ENCODE measurements at regions of chr1 and their contacts with region 1.

Region 1: GRCh38 chr1:61056573-61057439 is 25.6 kb upstream of the NFIA start:
- DNase-seq: peak; percentile 74
- H3K4me3 ChIP-seq: peak overlapping the region; percentile 33 to 77 (median 63)
- H3K27ac ChIP-seq: peak overlapping the region; percentile 79 to 96 (median 96)
- H3K4me1 ChIP-seq: peaks cover 18 to 40% (median 27%) of the 10 kb centered on the region in 4 donors
- H3K27me3 ChIP-seq: no peaks in the 10 kb centered on the region
- CTCF ChIP-seq: peak in 1 of 5 experiments; percentile 12
- EP300 ChIP-seq: no peak
- POLR2A ChIP-seq: no peak

Region 2: DNA sequence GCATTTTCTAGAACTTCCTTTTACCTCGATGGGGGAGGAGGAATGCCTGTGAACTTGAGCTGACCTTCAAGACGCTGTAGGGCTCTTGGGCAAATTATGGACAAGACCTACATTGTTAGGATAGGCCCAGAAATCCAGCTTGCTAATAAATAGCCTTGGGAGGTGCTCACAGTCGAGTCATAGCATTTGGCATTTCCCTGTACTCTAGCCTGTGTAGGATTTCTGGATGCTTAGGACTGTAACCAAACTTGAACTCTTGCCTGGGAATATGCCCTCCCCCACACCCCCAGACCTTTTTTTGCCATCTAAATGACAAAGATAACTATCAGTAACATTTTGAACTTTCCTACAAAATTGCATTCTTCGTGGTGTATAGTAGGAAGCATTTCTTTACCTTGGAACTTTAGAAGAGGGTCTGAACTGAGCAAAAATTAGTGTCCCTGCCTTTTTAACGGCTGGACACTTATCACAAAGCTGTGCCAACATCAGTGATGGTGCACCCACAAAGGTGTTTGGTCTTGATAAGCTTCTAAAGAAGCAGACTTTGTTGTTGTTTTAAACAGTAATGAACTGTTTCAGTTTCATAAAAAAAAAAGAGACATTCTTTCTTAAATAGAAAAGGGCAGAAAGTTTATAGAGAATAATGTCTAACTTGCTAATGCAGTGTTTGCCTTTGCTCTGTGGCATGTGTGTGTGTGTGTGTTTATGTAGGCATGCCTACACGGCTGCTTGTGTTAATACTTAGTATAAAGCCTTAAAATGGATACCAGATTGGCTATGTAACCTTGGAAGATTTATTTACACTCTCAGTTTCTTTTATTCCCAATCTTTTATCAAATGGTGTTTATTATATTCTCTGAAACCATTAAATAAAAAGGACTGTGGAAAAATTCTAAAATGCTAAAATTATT is 113.8 kb after region 1 on chr1:
- in situ Hi-C with region 1: no loop called
- intact Hi-C with region 1: no loop called
- DNase-seq: no peak
- H3K4me3 ChIP-seq: no peak overlapping the region
- H3K27ac ChIP-seq: peak overlapping the region; percentile 43 to 61 (median 59)
- H3K4me1 ChIP-seq: peaks cover 3 to 61% (median 25%) of the 10 kb centered on the region in 4 donors
- H3K27me3 ChIP-seq: no peaks in the 10 kb centered on the region
- CTCF ChIP-seq: no peak
- EP300 ChIP-seq: no peak
- POLR2A ChIP-seq: no peak

Region 3: GRCh38 chr1:61270761-61271411 is 214.1 kb after region 1 on chr1:
- in situ Hi-C with region 1: no loop called
- intact Hi-C with region 1: no loop called
- DNase-seq: no peak
- H3K4me3 ChIP-seq: no peak overlapping the region
- H3K27ac ChIP-seq: no peak overlapping the region
- H3K4me1 ChIP-seq: peaks cover 0 to 16% (median 3%) of the 10 kb centered on the region in 4 donors
- H3K27me3 ChIP-seq: no peaks in the 10 kb centered on the region
- CTCF ChIP-seq: no peak
- EP300 ChIP-seq: no peak
- POLR2A ChIP-seq: no peak

Region 4: DNA sequence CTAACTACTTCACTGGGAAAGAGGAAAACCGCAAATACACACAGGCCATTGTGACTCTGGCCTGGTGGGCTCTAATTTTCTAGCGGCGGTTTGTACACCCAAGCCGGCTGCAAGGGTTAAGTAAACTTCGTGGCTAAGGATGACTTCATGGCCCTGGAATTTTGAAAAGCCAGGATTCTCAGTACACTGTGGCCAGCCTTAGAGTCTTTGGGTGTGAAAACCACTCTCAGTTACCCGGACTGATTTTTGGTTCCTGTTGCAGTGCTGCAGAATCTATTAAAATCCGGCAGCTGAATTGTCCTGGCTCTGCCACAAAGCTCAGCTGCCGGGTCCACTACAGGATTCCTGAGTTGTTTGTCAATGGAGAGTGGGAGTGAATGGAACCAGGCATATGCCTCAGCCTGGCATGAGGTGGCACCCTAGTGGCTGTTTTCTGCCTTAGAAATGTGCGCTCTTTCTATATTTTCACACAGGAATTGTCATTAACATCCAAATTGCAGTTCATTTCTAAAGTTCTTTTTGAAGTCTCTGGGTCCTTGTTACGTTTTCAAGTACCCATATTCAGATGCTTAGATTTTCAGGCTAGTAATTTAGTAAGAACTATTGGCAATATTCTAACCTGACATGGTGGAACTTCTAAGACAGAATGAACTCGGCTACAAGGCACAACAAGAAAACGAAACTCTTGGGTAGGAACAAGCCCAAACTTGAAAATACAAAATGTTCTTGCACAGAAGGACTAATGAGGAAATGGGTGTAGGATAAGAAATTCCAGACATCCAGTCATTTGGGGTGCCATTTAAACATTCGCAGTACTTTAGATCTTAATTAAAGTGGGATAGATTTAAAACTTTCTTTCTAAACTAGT is 281.4 kb after region 1 on chr1:
- in situ Hi-C with region 1: loop called in 2 of 4 experiments (anchors 10 to 25 kb)
- intact Hi-C with region 1: loop called (anchors 1 kb)
- DNase-seq: peak; percentile 60
- H3K4me3 ChIP-seq: peak overlapping the region in 1 of 4 donors; percentile 1
- H3K27ac ChIP-seq: peak overlapping the region; percentile 69 to 78 (median 74)
- H3K4me1 ChIP-seq: peaks cover 7 to 26% (median 17%) of the 10 kb centered on the region in 4 donors
- H3K27me3 ChIP-seq: no peaks in the 10 kb centered on the region
- CTCF ChIP-seq: peak; percentile 62 to 79 (median 70)
- EP300 ChIP-seq: no peak
- POLR2A ChIP-seq: no peak